ENCODE measurements at regions of chr2 and their contacts with region 1.

Region 1: DNA sequence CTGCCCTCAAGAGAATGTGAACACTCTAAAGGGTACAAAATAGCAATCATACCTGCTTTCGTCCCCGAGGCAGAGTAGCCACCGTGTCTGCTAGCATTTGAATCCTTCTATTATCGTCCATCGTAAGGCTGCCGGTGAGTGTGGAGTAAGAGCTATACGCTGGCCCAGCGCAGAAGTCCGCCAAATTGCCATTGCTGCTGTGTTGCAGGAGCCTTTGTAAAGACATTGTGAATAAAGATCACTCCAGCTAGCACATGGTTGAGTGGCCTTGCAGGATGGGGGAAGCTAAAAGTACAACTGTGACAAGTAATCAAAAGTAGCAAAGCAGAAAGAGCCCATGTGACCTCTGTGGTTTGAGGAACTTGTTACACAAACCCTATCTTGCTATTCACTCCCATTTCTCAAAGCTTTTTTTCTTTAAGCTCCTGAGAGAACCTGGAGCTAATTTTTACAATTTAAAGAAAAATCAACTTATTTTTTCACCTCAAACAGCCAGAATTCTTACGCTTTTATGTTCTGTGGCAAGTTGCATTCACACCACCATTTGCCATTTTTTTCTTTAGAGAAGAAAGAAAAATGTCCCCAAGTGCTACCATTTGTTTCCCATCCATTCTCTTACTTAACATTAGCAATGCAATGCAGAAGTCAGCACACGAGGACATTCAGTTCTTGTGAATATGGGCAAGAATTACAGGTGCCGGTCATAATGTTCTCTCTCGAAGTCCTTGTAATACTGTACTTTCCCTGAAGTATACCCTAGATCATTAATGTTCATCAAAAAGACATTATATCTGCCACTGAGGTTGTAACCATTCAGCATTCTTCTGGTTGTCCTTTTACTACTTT is at the start of gene CYTIP:
- DNase-seq: peak in 11 of 14 experiments; percentile 35 to 93 (median 64)
- ATAC-seq: peak; percentile 41
- H3K4me3 ChIP-seq: peak within 1 kb of the TSS; percentile 72
- H3K4me3 Mint-ChIP-seq: peak within 1 kb of the TSS; percentile 95
- H3K27ac ChIP-seq: peak within 1 kb of the TSS; percentile 46 to 97
- H3K27ac Mint-ChIP-seq: peak within 1 kb of the TSS; percentile 97
- H3K4me1 ChIP-seq: peaks cover 9% of the 10 kb centered on the region
- H3K4me1 Mint-ChIP-seq: peaks cover 41% of the 10 kb centered on the region
- H3K27me3 ChIP-seq: no peaks in the 10 kb centered on the region
- H3K27me3 Mint-ChIP-seq: no peaks in the 10 kb centered on the region
- CTCF ChIP-seq: no peak
- total RNA-seq, gene CYTIP: 474 to 490 TPM

Region 2: DNA sequence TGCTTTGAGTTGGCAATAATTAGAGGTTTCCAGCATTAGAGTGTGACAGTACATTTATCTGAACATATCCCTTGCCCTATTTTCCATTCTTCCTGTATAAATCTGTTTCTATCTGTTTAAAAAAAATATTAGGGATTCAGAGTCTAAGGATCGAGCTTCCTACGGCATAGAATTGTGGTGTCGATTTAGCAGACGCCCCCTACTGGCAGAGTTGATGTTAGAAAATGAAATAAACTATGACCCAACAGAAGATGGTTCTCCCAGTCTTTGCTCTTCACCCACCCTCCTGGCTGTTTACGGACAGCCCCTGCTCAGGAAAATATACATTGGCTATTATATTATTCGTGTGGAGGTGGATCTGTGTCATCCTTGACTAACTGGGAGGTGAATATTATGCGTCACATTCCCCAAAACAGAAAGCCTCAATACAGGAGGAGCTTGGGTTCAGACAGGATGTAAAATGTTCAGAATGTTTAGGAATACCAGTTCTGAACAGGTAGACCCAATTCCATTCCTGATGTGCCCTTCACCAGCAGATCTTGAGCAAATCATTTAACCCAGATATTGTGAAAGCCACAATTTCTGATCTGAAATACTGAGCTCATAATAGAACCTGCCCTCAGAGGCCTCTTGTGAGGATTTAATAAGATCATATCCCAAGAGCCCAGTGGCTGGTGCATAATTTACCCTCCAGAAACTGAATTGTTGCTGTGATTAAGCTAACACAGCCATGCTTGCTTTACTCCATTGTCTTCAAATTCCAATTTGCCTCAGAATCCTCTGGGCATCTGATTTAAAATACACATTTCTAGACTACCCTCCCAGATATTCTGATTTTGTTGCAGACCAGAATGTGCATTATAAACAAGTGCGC is 107.6 kb before region 1 on chr2:
- CTCF ChIA-PET with region 1: interaction called, 3 read pairs
- POLR2A ChIA-PET with region 1: interaction called, 22 read pairs
- intact Hi-C with region 1: loop called in 1 of 2 experiments (anchors 10 kb)
- DNase-seq: peak in 10 of 14 experiments; percentile 12 to 76 (median 28)
- ATAC-seq: no peak
- H3K4me3 ChIP-seq: peak overlapping the region; percentile 6
- H3K4me3 Mint-ChIP-seq: peak overlapping the region; percentile 79
- H3K27ac ChIP-seq: no peak overlapping the region
- H3K27ac Mint-ChIP-seq: peak overlapping the region; percentile 83
- H3K4me1 ChIP-seq: peaks cover 30% of the 10 kb centered on the region
- H3K4me1 Mint-ChIP-seq: peaks cover 88% of the 10 kb centered on the region
- H3K27me3 ChIP-seq: no peaks in the 10 kb centered on the region
- H3K27me3 Mint-ChIP-seq: no peaks in the 10 kb centered on the region
- CTCF ChIP-seq: peak; percentile 82

Region 3: DNA sequence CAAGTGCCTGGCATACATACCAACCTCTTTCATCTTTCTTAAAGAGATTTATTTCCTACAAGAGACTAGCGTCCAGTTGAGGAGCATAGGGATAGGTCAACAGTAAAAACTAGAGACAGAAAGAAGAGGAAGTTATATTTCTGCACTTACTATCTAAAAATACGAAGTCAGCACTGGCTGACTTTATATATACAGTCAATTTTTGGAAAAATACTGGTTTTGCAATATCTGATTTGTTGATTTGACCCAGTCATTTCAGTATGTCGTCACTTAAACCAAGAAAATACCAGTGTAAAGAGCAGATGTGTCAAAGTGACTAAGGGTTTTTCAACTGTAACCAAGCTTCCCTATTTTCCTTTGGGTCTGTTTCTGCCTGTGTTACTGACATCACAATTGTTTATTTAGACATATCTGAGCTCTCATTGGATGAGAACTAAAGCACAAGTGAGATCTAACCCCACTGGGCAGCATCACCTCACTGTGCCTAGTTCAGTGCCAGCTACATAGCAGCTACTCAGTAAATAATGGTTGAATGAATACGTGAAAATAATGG is 23.2 kb before region 1 on chr2:
- CTCF ChIA-PET with region 1: interaction called, 4 read pairs
- POLR2A ChIA-PET with region 1: interaction called, 384 read pairs
- intact Hi-C with region 1: loop called in 1 of 2 experiments (anchors 1 kb)
- DNase-seq: peak in 3 of 14 experiments; percentile 63 to 73 (median 70)
- ATAC-seq: peak; percentile 8
- H3K4me3 ChIP-seq: no peak overlapping the region
- H3K4me3 Mint-ChIP-seq: peak overlapping the region; percentile 72
- H3K27ac ChIP-seq: peak overlapping the region; percentile 69
- H3K27ac Mint-ChIP-seq: peak overlapping the region; percentile 96
- H3K4me1 ChIP-seq: peaks cover 49% of the 10 kb centered on the region
- H3K4me1 Mint-ChIP-seq: peaks cover 80% of the 10 kb centered on the region
- H3K27me3 ChIP-seq: no peaks in the 10 kb centered on the region
- H3K27me3 Mint-ChIP-seq: no peaks in the 10 kb centered on the region
- CTCF ChIP-seq: no peak

Region 4: DNA sequence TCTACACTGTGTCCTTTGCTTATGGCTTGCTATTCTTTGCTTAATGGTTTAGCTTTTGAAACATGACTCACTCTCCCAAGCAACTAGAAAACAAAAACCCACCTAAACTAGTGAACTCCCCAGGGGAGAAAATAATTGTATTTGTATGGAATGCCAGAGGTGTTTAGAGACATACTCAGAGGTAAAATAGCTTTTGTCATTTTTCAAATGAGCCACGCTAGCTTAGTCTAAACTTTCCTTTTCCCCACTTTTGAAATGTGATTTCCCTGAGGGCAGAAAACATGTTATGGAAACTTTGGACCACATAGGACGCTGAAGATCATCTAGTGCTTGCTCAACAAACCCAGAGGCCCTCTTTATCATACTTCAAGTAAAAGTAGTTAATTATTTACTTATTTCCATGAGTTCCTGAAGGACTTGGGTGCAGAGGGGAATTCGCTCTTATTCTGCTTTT is 16.4 kb after region 1 on chr2:
- CTCF ChIA-PET with region 1: interaction called, 4 read pairs
- POLR2A ChIA-PET with region 1: interaction called, 118 read pairs
- intact Hi-C with region 1: loop called in 1 of 2 experiments (anchors 1 kb)
- DNase-seq: no peak
- ATAC-seq: no peak
- H3K4me3 ChIP-seq: no peak overlapping the region
- H3K4me3 Mint-ChIP-seq: no peak overlapping the region
- H3K27ac ChIP-seq: no peak overlapping the region
- H3K27ac Mint-ChIP-seq: peak overlapping the region; percentile 74
- H3K4me1 ChIP-seq: peaks cover 23% of the 10 kb centered on the region
- H3K4me1 Mint-ChIP-seq: peaks cover 86% of the 10 kb centered on the region
- H3K27me3 ChIP-seq: no peaks in the 10 kb centered on the region
- H3K27me3 Mint-ChIP-seq: no peaks in the 10 kb centered on the region
- CTCF ChIP-seq: no peak

Region 5: DNA sequence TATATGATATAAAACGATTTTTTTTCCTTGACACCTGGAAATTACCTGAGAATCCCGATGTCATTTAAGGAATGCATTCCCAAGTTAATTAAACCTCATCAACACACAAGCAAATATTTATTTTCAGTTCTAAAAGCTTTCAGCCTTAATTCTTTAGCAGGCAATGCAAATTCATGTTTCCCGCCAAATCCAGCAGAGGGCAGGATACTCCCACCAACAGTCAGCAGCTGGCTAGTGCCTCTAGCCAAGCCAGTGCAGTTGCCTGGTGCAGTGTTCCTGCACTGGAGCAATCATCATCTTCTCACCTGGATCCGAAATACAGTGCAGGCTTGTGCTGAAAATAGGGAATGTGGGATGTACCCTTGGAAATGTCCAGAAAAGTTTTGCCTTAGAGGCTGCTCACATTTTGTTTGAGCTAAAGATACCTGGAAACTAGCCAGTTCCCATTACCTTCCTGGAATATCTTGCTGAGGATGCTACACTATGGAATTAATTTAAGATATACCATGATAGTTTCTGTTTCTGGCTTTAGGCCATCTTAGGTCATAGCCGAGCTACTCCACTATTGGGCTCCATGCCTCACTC is 48.3 kb after region 1 on chr2:
- CTCF ChIA-PET with region 1: interaction called, 7 read pairs
- POLR2A ChIA-PET with region 1: interaction called, 24 read pairs
- intact Hi-C with region 1: loop called in 1 of 2 experiments (anchors 5 kb)
- DNase-seq: peak; percentile 57 to 86 (median 66)
- ATAC-seq: peak; percentile 92
- H3K4me3 ChIP-seq: no peak overlapping the region
- H3K4me3 Mint-ChIP-seq: no peak overlapping the region
- H3K27ac ChIP-seq: no peak overlapping the region
- H3K27ac Mint-ChIP-seq: no peak overlapping the region
- H3K4me1 ChIP-seq: peaks cover 7% of the 10 kb centered on the region
- H3K4me1 Mint-ChIP-seq: peaks cover 47% of the 10 kb centered on the region
- H3K27me3 ChIP-seq: no peaks in the 10 kb centered on the region
- H3K27me3 Mint-ChIP-seq: no peaks in the 10 kb centered on the region
- CTCF ChIP-seq: peak; percentile 83

Measured in CD4-positive, alpha-beta T cell (primary cell).